IMR-90 (cell line): ENCODE measurements at regions of chr18 and their contacts with region 1.

Region 1: GRCh38 chr18:9971313-9971920 is 57.6 kb downstream of the VAPA start:
- DNase-seq: peak; percentile 81
- ATAC-seq: peak; percentile 87
- H3K4me3 ChIP-seq: no peak overlapping the region
- H3K27ac ChIP-seq: no peak overlapping the region
- H3K4me1 ChIP-seq: peaks cover 8% of the 10 kb centered on the region
- H3K27me3 ChIP-seq: peaks cover 2% of the 10 kb centered on the region; the same call in 1 of the 2 replicates
- CTCF ChIP-seq: peak; percentile 88
- POLR2A ChIP-seq: 0 out of 2 replicates have a peak, but pooled peaks have one; percentile 40
- RAD21 ChIP-seq: peak; percentile 99

Region 2: GRCh38 chr18:10041180-10041579 is 69.8 kb after region 1 on chr18:
- CTCF ChIA-PET with region 1: no interaction called
- POLR2A ChIA-PET with region 1: no interaction called
- dilution Hi-C with region 1: no loop called
- in situ Hi-C with region 1: no loop called
- intact Hi-C with region 1: loop called (anchors 2 kb)
- DNase-seq: peak; percentile 57
- ATAC-seq: peak; percentile 65
- H3K4me3 ChIP-seq: no peak overlapping the region
- H3K27ac ChIP-seq: peak overlapping the region; percentile 55; the same call in 1 of the 2 replicates
- H3K4me1 ChIP-seq: no peaks in the 10 kb centered on the region; the same call in 1 of the 2 replicates
- H3K27me3 ChIP-seq: no peaks in the 10 kb centered on the region
- CTCF ChIP-seq: no peak
- POLR2A ChIP-seq: no peak
- RAD21 ChIP-seq: no peak

Region 3: GRCh38 chr18:10057894-10058791 is 86.7 kb after region 1 on chr18:
- CTCF ChIA-PET with region 1: no interaction called
- POLR2A ChIA-PET with region 1: no interaction called
- dilution Hi-C with region 1: no loop called
- in situ Hi-C with region 1: no loop called
- intact Hi-C with region 1: no loop called
- DNase-seq: peak; percentile 84
- ATAC-seq: peak; percentile 45
- H3K4me3 ChIP-seq: no peak overlapping the region
- H3K27ac ChIP-seq: peak overlapping the region; percentile 97
- H3K4me1 ChIP-seq: peaks cover 38% of the 10 kb centered on the region
- H3K27me3 ChIP-seq: no peaks in the 10 kb centered on the region
- CTCF ChIP-seq: no peak
- POLR2A ChIP-seq: no peak
- RAD21 ChIP-seq: no peak

Region 4: GRCh38 chr18:10230072-10230471 is 258.7 kb after region 1 on chr18:
- CTCF ChIA-PET with region 1: no interaction called
- POLR2A ChIA-PET with region 1: no interaction called
- dilution Hi-C with region 1: no loop called
- in situ Hi-C with region 1: no loop called
- intact Hi-C with region 1: loop called (anchors 10 kb)
- DNase-seq: peak; percentile 83
- ATAC-seq: peak; percentile 47; the same call in 1 of the 2 replicates
- H3K4me3 ChIP-seq: no peak overlapping the region
- H3K27ac ChIP-seq: no peak overlapping the region
- H3K4me1 ChIP-seq: peaks cover 4% of the 10 kb centered on the region
- H3K27me3 ChIP-seq: no peaks in the 10 kb centered on the region
- CTCF ChIP-seq: peak; percentile 34
- POLR2A ChIP-seq: no peak
- RAD21 ChIP-seq: peak; percentile 34; the same call in 1 of the 2 replicates

Region 5: DNA sequence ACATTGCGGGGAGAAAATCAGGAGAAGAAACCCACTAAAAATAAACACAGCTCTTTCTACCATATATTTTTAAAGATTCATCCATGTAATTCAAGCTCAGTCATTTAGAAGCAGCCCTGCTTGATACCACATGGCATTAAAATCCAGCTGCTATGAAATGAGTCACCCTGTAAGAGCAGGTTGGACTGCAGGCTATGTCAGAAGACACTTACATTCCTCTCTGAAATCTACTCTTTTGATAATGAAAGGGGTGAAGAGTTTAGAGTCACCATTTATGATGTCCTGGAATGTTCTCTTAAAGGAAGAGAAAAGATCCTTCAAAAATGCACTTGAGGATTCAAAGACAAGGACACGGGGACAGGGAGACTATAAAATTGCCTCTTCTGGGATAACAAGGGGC is 382.4 kb after region 1 on chr18:
- CTCF ChIA-PET with region 1: no interaction called
- POLR2A ChIA-PET with region 1: no interaction called
- dilution Hi-C with region 1: no loop called
- in situ Hi-C with region 1: no loop called
- intact Hi-C with region 1: loop called (anchors 10 kb)
- DNase-seq: peak; percentile 95
- ATAC-seq: peak; percentile 88
- H3K4me3 ChIP-seq: no peak overlapping the region
- H3K27ac ChIP-seq: peak overlapping the region; percentile 34; the same call in 1 of the 2 replicates
- H3K4me1 ChIP-seq: peaks cover 22% of the 10 kb centered on the region
- H3K27me3 ChIP-seq: no peaks in the 10 kb centered on the region
- CTCF ChIP-seq: no peak
- POLR2A ChIP-seq: no peak
- RAD21 ChIP-seq: 0 out of 2 replicates have a peak, but pooled peaks have one; percentile 5

Region 6: DNA sequence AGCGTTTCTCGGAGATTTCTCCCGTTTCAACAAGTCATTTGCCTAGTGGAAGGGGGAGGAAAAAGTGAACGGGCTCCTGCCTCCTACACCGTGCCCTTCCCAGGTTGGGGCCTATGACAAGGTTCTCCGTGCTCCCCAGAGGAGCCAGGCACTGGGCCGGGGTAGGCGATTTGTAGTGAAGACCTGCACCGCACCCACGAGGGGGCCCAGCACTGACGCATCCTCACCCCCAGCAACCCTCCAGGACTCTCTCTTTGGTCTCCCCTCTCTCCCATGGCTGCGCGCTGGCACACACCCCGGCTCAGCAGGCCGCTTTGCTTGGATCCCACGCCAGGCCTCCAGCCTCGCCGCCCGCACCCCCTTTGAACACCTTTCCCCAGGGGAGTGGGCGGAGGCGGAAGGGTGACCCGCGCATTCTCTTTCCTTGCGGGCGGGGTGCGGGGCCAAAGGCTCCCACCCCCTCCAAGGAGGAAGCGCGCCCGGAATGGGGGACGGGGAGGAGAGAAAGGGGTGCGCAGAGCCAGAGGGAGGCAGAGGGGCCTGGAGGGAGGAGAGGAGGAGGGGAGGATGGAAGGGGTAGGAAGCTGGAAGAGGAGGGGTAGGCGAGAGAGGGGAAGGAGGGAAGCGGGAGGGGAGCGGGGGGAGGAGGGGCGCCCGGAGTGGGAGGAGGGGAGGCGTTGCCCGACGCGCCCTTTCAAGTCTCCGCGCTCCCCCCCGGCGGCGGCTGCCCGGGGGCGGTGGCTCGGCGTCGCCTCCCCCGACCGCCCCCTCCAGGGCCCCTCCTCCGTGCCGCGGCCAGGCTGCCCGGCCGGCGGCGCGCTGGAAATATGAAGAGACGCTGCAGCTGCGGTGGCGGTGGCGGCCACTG is 482.6 kb after region 1 on chr18 and contains the start of gene APCDD1:
- CTCF ChIA-PET with region 1: no interaction called
- POLR2A ChIA-PET with region 1: no interaction called
- dilution Hi-C with region 1: no loop called
- in situ Hi-C with region 1: no loop called
- intact Hi-C with region 1: loop called (anchors 10 kb)
- DNase-seq: no peak
- ATAC-seq: peak; percentile 79
- H3K4me3 ChIP-seq: peak within 1 kb of the TSS; percentile 48
- H3K27ac ChIP-seq: no peak within 1 kb of the TSS
- H3K4me1 ChIP-seq: no peaks in the 10 kb centered on the region; the same call in 1 of the 2 replicates
- H3K27me3 ChIP-seq: peaks cover 40% of the 10 kb centered on the region
- CTCF ChIP-seq: no peak
- POLR2A ChIP-seq: no peak
- RAD21 ChIP-seq: no peak
- total RNA-seq, gene APCDD1: 0.83 and 1.1 TPM in 2 replicates